ENCODE measurements at regions of chr15 and their contacts with region 1.

Region 1: GRCh38 chr15:39580117-39580484 is 778 bp upstream of the THBS1 start:
- DNase-seq: peak; percentile 43 to 86 (median 78)
- H3K4me3 ChIP-seq: peak overlapping the region; percentile 28 to 73 (median 53)
- H3K27ac ChIP-seq: peak overlapping the region in 26 of 59 donors; percentile 0 to 81 (median 52)
- H3K27me3 ChIP-seq: peaks cover 0 to 44% (median 11%) of the 10 kb centered on the region in 45 donors
- CTCF ChIP-seq: peak; percentile 74 to 97 (median 92)

Region 2: DNA sequence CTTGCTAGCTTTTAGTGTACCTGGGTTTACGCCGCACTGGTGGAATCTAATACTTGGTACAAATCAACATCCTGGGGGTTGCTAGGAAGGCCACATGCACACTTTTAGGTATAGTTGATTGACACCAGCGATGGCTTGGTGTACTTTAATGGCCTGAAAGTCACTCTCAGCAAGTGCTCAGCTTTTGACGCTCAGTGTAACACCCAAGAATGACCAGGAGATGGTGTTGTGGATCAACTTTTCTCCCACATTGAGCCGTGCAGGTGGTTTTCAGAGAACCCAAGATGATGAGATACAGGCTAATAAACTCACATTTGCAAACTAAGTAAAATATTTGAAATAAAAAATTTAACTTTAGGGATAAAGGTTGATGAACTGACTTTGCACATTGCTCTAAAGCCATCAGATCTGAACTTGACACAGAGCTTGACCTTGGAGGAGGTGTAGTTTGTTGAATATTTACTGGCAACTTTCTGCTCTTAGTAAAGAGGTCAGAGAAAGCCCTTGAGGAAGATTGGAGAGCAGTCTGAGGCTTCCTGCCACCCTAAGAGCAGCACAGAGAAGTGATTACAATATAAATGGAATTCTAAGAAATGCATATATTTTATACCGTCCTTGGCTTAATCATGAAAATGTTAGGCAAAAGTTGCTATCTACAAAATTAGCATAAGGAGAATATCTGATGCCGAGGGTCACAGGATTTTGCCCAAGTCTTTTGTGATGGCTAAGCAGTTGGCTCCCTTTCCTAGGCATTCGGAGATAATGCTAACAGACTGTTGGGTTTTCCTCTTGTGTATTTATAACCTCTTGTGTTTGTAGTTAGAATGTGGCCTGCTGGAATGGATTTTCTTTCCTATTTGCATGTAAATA is 872.1 kb before region 1 on chr15:
- intact Hi-C with region 1: loop called in 1 of 2 experiments (anchors 5 kb)
- DNase-seq: peak in 2 of 10 donors; percentile 28 to 32
- H3K4me3 ChIP-seq: no peak overlapping the region
- H3K27ac ChIP-seq: no peak overlapping the region
- H3K27me3 ChIP-seq: peaks cover 0 to 30% (median 5%) of the 10 kb centered on the region in 45 donors
- CTCF ChIP-seq: peak; percentile 39 to 81 (median 70)

Region 3: GRCh38 chr15:38817427-38818156 is 762.5 kb before region 1 on chr15:
- intact Hi-C with region 1: loop called (anchors 2 to 10 kb)
- DNase-seq: peak; percentile 70 to 85 (median 79)
- H3K4me3 ChIP-seq: peak overlapping the region in 17 of 59 donors; percentile 4 to 45 (median 17)
- H3K27ac ChIP-seq: no peak overlapping the region
- H3K27me3 ChIP-seq: peaks cover 0 to 6% (median 0%) of the 10 kb centered on the region in 45 donors
- CTCF ChIP-seq: peak; percentile 78 to 100 (median 96)

Region 4: GRCh38 chr15:38828031-38828532 is 752.0 kb before region 1 on chr15:
- intact Hi-C with region 1: loop called in 1 of 2 experiments (anchors 10 kb)
- DNase-seq: no peak
- H3K4me3 ChIP-seq: no peak overlapping the region
- H3K27ac ChIP-seq: no peak overlapping the region
- H3K27me3 ChIP-seq: peaks cover 0 to 8% (median 0%) of the 10 kb centered on the region in 45 donors
- CTCF ChIP-seq: no peak

Region 5: GRCh38 chr15:39171944-39172368 is 408.1 kb before region 1 on chr15:
- intact Hi-C with region 1: loop called (anchors 2 to 5 kb)
- DNase-seq: peak in 6 of 10 donors; percentile 7 to 74 (median 34)
- H3K4me3 ChIP-seq: peak overlapping the region in 29 of 59 donors; percentile 29 to 66 (median 51)
- H3K27ac ChIP-seq: peak overlapping the region in 22 of 59 donors; percentile 31 to 84 (median 69)
- H3K27me3 ChIP-seq: no peaks in the 10 kb centered on the region
- CTCF ChIP-seq: peak in 55 of 56 donors; percentile 30 to 74 (median 54)